ENCODE measurements at regions of chr1 and their contacts with region 1.

Region 1: GRCh38 chr1:162056043-162056442 is 13.4 kb upstream of the NOS1AP start:
- DNase-seq: peak; percentile 81
- H3K4me3 Mint-ChIP-seq: no peak overlapping the region
- H3K27ac Mint-ChIP-seq: no peak overlapping the region
- H3K4me1 Mint-ChIP-seq: peaks cover 13% of the 10 kb centered on the region
- H3K27me3 Mint-ChIP-seq: no peaks in the 10 kb centered on the region
- CTCF ChIP-seq: peak; percentile 92

Region 2: GRCh38 chr1:162230096-162230495 is 174.1 kb after region 1 on chr1:
- CTCF ChIA-PET with region 1: interaction called, 18 read pairs
- intact Hi-C with region 1: loop called (anchors 1 kb)
- DNase-seq: peak; percentile 61
- H3K4me3 Mint-ChIP-seq: no peak overlapping the region
- H3K27ac Mint-ChIP-seq: no peak overlapping the region
- H3K4me1 Mint-ChIP-seq: peaks cover 16% of the 10 kb centered on the region
- H3K27me3 Mint-ChIP-seq: no peaks in the 10 kb centered on the region
- CTCF ChIP-seq: no peak

Region 3: DNA sequence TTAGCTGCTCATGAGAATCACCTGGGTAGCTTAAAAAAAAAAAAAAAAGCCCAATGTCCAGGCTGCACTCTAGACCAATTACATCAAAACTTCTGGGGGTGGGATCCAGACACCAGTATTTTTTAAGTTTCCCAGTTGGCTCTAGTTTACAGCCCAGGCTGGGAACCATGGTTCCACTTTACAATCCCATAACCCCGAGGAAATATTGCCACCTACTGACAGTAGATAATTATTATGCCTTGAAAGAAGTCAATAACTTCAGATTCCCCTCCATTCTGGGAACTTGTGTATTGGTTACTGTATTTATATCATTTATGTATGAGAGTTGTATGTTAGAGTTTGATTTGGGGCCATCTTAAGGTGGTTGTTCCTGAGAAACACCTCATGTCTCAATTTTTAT is 220.4 kb after region 1 on chr1:
- CTCF ChIA-PET with region 1: interaction called, 13 read pairs
- intact Hi-C with region 1: loop called (anchors 1 kb)
- DNase-seq: peak; percentile 32
- H3K4me3 Mint-ChIP-seq: no peak overlapping the region
- H3K27ac Mint-ChIP-seq: no peak overlapping the region
- H3K4me1 Mint-ChIP-seq: peaks cover 8% of the 10 kb centered on the region
- H3K27me3 Mint-ChIP-seq: no peaks in the 10 kb centered on the region
- CTCF ChIP-seq: peak; percentile 56

Region 4: DNA sequence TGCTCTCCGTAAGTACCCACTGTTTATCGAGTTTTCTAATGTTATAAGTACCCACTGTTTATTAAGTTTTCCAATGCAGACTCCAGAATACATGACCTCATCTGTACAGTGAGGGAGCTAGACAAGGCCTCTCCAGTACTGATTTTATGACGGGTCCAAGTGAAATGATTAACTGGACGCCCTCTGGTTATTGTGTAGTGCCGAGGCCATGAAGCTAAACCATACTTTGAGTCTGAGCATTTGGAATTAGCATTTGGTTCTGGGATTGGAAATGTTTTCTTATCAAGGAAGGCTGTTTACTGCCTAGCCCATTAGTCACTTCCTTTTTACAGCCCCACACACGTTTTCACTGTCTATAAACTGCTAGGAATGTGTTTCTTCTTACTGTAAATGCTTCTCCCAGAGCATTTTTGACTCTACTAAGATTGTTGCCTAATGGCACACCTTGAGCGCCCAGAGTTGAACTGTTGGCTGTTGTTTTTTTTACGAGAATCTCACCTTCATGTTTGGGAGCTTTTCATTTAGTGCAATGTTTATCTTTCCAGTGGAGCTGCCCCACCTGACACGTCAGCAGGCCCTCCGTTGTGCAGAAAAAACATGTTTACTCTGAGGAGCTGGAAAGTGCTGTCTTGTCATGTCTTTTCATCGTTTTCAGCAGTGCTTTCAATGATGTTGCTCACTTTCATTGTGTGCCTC is 293.7 kb after region 1 on chr1:
- CTCF ChIA-PET with region 1: interaction called, 3 read pairs
- intact Hi-C with region 1: loop called (anchors 2 kb)
- DNase-seq: peak; percentile 17
- H3K4me3 Mint-ChIP-seq: peak overlapping the region; percentile 7
- H3K27ac Mint-ChIP-seq: peak overlapping the region; percentile 45
- H3K4me1 Mint-ChIP-seq: peaks cover 51% of the 10 kb centered on the region
- H3K27me3 Mint-ChIP-seq: no peaks in the 10 kb centered on the region
- CTCF ChIP-seq: no peak

Region 5: DNA sequence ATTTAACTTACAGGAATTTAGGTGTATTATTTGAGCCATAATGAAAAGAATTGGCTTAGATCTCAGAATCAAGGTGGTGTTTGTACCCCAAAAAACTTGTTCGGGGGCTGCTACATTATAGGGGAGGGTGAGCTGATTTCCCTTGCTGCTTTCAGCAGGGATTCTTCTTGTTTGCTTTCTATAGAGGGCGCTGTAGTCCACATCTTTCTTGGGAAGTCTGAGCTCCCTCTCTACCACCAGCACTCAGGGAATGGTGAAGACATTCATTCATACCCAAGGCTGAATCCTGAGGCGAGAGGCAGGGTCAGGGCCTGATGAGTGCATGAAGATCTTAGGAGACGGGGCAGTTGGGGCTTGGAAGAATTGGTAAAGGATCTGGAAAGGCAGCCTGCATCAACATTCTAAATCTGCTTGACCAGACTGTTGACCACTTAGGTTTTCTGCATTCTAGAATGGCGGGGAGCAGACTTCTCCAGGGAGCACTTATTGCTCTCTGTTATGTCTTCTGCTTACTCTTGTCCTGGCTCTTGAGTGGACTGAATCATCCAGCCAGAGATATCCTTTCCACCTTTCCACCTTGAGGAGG is 301.7 kb after region 1 on chr1:
- CTCF ChIA-PET with region 1: interaction called, 10 read pairs
- intact Hi-C with region 1: no loop called
- DNase-seq: peak; percentile 48
- H3K4me3 Mint-ChIP-seq: no peak overlapping the region
- H3K27ac Mint-ChIP-seq: no peak overlapping the region
- H3K4me1 Mint-ChIP-seq: no peaks in the 10 kb centered on the region
- H3K27me3 Mint-ChIP-seq: no peaks in the 10 kb centered on the region
- CTCF ChIP-seq: peak; percentile 70

Region 6: DNA sequence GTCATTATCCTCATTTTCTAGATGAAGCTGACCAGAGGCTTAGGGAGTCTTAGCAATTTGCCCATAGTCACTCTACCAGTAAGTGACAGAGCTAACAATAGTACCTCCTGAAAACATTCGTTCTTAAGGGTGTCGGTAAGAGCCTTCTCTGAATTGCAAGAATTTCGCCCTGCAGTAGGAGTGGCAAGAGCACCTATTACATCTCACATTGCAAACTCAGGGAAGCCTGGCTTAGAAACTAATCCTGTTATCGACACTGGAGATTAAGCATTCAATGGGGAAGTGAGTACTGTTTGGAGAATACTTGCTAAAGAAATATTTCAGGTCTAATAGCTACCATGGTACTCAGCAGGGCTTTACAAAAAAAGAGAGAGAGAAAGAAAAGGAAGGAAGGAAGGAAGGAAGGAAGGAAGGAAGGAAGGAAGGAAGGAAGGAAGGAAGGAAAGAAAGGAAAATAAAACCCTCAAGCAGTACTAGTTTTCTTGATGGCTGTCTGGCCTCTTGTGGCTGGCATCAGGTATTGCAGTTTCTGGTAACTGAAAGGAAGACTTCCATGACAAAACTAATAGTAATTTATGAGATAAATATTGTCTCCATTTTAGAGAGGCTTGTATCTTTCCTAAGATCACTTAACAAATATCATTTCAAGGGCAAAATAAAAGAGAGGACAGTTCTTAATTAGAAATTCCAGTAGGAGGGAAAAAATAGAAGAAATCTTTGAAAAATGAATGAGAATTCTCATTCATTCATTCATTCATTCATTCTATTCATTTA is 335.9 kb after region 1 on chr1:
- CTCF ChIA-PET with region 1: interaction called, 5 read pairs
- intact Hi-C with region 1: loop called (anchors 1 kb)
- DNase-seq: peak; percentile 35
- H3K4me3 Mint-ChIP-seq: no peak overlapping the region
- H3K27ac Mint-ChIP-seq: no peak overlapping the region
- H3K4me1 Mint-ChIP-seq: peaks cover 35% of the 10 kb centered on the region
- H3K27me3 Mint-ChIP-seq: peaks cover 8% of the 10 kb centered on the region
- CTCF ChIP-seq: peak; percentile 75